Gastrocnemius medialis (tissue), 4 donors: ENCODE measurements at regions of chr2 and their contacts with region 1.

Region 1: GRCh38 chr2:85273738-85274731 is 53.8 kb downstream of the TGOLN2 start:
- DNase-seq: no peak
- ATAC-seq: peak in 1 of 2 donors; percentile 27
- H3K4me3 ChIP-seq: no peak overlapping the region
- H3K27ac ChIP-seq: peak overlapping the region in 2 of 4 donors; percentile 18 to 44
- H3K4me1 ChIP-seq: peaks cover 13 to 19% of the 10 kb centered on the region in 2 donors
- H3K27me3 ChIP-seq: no peaks in the 10 kb centered on the region
- CTCF ChIP-seq: no peak
- POLR2A ChIP-seq: no peak

Region 2: DNA sequence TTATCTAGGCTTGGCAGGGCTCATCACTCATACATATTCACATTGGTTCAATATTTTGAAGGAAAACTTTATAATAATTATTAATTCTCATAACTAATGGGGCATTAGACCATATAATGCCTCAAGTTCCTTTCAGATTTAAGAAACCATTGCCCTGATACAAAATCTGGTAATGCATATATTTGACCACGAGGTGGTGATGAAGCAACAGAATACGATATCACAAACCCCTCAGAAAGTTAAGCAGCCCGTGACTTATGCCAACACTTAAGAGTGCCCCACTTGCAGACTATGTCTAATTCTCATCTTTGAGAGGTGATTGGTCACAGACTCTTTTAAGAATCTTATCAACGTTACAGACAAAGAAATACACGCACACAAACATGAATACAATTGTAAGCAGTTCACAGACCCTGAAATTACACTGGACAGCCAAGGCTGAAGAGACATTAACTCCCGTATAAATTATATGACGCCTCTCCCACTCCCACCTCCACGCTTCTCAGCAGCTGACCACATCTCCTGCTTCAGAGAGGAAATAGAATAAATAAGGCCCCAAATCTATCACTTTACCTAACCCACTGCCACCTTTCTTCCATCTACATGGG is 778.4 kb before region 1 on chr2:
- in situ Hi-C with region 1: loop called in 1 of 4 experiments (anchors 25 kb)
- intact Hi-C with region 1: no loop called
- DNase-seq: no peak
- ATAC-seq: peak in 1 of 2 donors; percentile 56
- H3K4me3 ChIP-seq: no peak overlapping the region
- H3K27ac ChIP-seq: no peak overlapping the region
- H3K4me1 ChIP-seq: no peaks in the 10 kb centered on the region
- H3K27me3 ChIP-seq: no peaks in the 10 kb centered on the region
- CTCF ChIP-seq: peak; percentile 40 to 61 (median 55)
- POLR2A ChIP-seq: no peak

Region 3: DNA sequence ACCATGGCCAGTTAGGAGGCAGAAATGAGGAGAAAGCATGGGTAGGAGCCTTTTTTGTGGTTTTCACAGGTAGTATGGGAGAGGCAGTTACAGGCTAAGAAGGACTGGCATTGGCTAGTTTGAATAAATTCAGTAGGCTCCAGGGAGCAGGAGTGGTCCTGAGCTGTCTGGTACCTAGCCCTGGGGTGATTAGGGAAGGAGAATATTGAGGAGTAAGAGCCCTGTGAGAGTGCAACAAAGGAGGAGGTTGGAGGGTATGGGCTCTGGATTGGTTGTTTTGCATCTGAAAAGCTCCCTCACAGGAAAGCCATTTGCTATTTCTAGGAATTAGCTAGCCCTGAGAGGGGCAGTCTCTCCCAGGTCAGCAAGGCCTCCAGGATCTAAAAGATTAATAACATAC is 154.1 kb before region 1 on chr2:
- in situ Hi-C with region 1: loop called in 1 of 4 experiments (anchors 10 kb)
- intact Hi-C with region 1: no loop called
- DNase-seq: no peak
- ATAC-seq: no peak
- H3K4me3 ChIP-seq: no peak overlapping the region
- H3K27ac ChIP-seq: no peak overlapping the region
- H3K4me1 ChIP-seq: no peaks in the 10 kb centered on the region
- H3K27me3 ChIP-seq: no peaks in the 10 kb centered on the region
- CTCF ChIP-seq: no peak
- POLR2A ChIP-seq: no peak

Region 4: GRCh38 chr2:85248773-85249509 is 25.1 kb before region 1 on chr2:
- in situ Hi-C with region 1: no loop called
- intact Hi-C with region 1: loop called (anchors 2 kb)
- DNase-seq: peak; percentile 53 to 73
- ATAC-seq: peak; percentile 87 to 91
- H3K4me3 ChIP-seq: no peak overlapping the region
- H3K27ac ChIP-seq: peak overlapping the region; percentile 48 to 70 (median 59)
- H3K4me1 ChIP-seq: peaks cover 32 to 34% of the 10 kb centered on the region in 2 donors
- H3K27me3 ChIP-seq: no peaks in the 10 kb centered on the region
- CTCF ChIP-seq: no peak
- POLR2A ChIP-seq: no peak